ENCODE measurements at regions of chr11 and their contacts with region 1.

Region 1: GRCh38 chr11:117946842-117947526 is 17.8 kb upstream of the TMPRSS13 start:
- DNase-seq: peak; percentile 96
- H3K4me3 ChIP-seq: no peak overlapping the region
- H3K27ac ChIP-seq: no peak overlapping the region
- H3K4me1 ChIP-seq: peaks cover 4 to 10% (median 6%) of the 10 kb centered on the region in 4 donors
- H3K27me3 ChIP-seq: peaks cover 0 to 24% (median 0%) of the 10 kb centered on the region in 4 donors
- CTCF ChIP-seq: peak; percentile 97 to 98 (median 98)
- EP300 ChIP-seq: no peak
- POLR2A ChIP-seq: no peak

Region 2: DNA sequence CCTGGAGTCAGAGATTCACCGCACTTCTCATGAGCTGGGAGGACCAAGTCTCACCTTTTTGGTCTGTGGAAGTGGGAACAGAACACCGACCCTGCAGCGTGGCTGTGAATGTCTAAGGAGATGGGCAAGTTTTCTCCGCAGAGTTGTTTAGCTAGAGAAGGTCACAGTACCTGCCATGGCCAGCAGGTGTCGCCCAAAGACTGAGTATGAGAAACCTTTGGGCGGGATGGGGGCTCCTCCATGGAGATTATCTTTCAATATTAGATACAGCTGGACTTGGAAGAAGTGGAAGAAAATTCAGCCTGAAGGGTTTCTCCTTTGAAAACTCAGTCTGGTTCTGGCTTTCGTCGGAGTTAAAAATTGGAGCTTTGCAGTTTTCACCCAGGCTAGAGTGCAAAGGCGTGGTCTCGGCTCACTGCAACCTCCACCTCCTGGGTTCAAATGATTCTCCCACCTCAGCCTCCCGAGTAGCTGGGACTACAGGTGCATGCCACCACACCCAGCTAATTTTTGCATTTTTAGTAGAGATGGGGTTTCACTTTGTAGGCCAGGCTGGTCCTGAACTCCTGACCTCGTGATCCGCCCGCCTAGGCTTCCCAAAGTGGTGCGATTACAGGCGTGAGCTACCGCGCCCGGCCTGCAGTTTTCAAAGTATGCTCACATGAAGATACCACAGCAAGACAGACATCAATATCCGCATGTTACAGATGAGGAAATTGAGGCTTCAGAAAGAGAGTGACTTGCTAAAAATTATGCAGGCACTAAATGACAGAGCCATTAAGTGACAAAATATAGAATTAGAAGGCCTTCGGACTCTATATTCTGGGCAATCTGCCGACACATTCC is 139.3 kb before region 1 on chr11:
- intact Hi-C with region 1: loop called (anchors 10 kb)
- DNase-seq: peak; percentile 95
- H3K4me3 ChIP-seq: no peak overlapping the region
- H3K27ac ChIP-seq: no peak overlapping the region
- H3K4me1 ChIP-seq: peaks cover 0 to 23% (median 17%) of the 10 kb centered on the region in 4 donors
- H3K27me3 ChIP-seq: peaks cover 0 to 24% (median 0%) of the 10 kb centered on the region in 4 donors
- CTCF ChIP-seq: peak; percentile 88 to 91 (median 91)
- EP300 ChIP-seq: no peak
- POLR2A ChIP-seq: no peak

Region 3: DNA sequence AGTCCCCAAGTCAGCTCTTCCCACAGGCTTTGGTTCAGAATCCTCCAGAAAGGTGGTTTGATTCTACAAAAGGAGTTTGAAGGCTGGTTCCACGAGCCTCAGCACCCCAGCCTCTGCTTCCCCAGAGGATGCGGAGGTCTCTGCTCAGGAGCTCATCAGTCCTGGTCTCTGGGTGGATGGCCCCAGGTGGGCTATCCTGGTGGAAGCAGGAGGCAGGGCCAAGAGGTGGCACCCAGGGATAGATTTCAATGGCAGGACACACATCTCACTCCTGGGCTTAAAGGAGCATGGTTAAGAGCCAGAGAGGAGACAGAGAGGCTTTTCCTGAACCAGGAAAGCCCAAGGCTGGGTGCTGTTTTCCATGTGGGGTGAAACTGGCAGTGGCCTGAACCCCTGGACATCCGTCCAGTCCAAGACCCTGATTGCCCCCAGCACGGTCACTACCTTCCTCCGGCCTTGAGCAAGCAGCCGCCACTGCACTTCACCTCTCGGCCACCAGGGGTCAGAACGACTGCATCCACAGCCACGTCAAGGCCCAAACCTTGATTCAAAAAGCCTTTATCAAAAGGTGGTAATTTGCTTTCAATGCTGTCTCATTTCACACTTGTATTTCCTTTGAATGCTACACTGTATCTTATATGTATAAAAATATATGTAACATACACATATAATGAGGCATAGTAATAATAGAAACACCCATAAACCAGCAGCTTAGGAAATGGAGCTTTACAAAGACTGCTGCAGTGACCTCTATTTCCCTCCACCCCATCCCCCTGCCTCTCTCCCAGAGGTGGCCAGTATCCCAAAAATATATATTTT is 103.1 kb before region 1 on chr11:
- intact Hi-C with region 1: loop called (anchors 1 kb)
- DNase-seq: no peak
- H3K4me3 ChIP-seq: no peak overlapping the region
- H3K27ac ChIP-seq: no peak overlapping the region
- H3K4me1 ChIP-seq: peaks cover 9 to 20% (median 14%) of the 10 kb centered on the region in 4 donors
- H3K27me3 ChIP-seq: no peaks in the 10 kb centered on the region
- CTCF ChIP-seq: peak; percentile 99 to 100 (median 99)
- EP300 ChIP-seq: no peak
- POLR2A ChIP-seq: no peak

Region 4: GRCh38 chr11:118027691-118028090 is 80.7 kb after region 1 on chr11:
- intact Hi-C with region 1: no loop called
- DNase-seq: peak; percentile 81
- H3K4me3 ChIP-seq: no peak overlapping the region
- H3K27ac ChIP-seq: no peak overlapping the region
- H3K4me1 ChIP-seq: no peaks in the 10 kb centered on the region
- H3K27me3 ChIP-seq: peaks cover 0 to 7% (median 0%) of the 10 kb centered on the region in 4 donors
- CTCF ChIP-seq: no peak
- EP300 ChIP-seq: no peak
- POLR2A ChIP-seq: no peak

Measured in esophagus muscularis mucosa (tissue), 4 donors.